Heart left ventricle (tissue), 16 donors: ENCODE measurements at regions of chr5 and their contacts with region 1.

Region 1: GRCh38 chr5:149656576-149657182 is 73.4 kb upstream of the PPARGC1B start:
- DNase-seq: peak in 3 of 5 donors; percentile 49 to 61 (median 49)
- ATAC-seq: peak in 3 of 4 donors; percentile 33 to 51 (median 47)
- H3K4me3 ChIP-seq: no peak overlapping the region
- H3K27ac ChIP-seq: peak overlapping the region in 7 of 12 donors; percentile 33 to 84 (median 80)
- H3K4me1 ChIP-seq: peaks cover 0 to 32% (median 6%) of the 10 kb centered on the region in 12 donors
- H3K27me3 ChIP-seq: no peaks in the 10 kb centered on the region
- CTCF ChIP-seq: peak; percentile 60 to 77 (median 68)
- POLR2A ChIP-seq: no peak

Region 2: GRCh38 chr5:149694007-149694406 is 37.3 kb after region 1 on chr5:
- intact Hi-C with region 1: loop called in 1 of 10 experiments (anchors 1 kb)
- DNase-seq: peak; percentile 67 to 87 (median 78)
- ATAC-seq: peak; percentile 93 to 96 (median 96)
- H3K4me3 ChIP-seq: peak overlapping the region in 5 of 12 donors; percentile 9 to 28 (median 19)
- H3K27ac ChIP-seq: peak overlapping the region; percentile 22 to 94 (median 82)
- H3K4me1 ChIP-seq: peaks cover 0 to 27% (median 8%) of the 10 kb centered on the region in 12 donors
- H3K27me3 ChIP-seq: no peaks in the 10 kb centered on the region
- CTCF ChIP-seq: no peak
- POLR2A ChIP-seq: no peak

Region 3: DNA sequence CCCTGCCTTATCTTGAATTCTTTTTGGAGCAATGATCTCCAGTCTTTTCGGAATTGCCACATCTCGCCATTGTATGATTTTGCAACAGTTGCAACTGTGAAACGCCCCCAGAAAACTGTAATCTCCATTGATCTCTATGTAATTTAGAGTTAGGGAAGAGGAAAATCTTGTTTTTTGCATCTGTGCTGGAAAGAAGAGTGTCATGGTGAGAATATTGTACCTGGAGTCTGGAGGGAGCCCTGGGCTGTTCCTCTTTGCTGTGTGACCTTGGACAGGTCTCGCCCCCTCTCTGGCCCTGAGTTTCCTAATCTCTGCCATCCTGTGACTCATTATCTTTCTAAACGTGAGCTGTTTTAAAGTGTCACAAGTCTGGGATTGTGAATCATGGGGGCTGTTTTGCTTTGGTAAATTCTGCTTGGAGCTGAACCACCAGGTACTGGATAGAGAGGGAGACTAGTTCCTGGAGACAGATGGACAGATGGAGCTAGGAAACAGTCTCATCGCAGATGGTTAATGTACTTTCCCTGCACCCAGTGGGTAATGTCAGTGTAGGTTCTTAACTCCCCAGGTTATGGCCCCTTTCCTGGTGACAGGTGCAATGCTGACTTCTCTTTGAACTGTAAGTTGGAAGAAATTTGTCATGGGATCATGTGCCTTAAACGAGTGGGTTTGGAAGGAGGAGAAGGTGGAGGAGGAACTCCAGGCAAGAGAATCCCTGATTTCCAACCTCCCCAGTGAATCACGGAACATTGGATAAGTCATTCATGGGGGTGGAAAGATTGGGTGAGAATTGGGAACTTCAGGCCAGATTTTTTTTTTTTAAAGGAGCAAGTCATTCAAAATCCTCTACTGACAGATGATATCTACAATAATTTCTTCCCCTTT is 93.0 kb after region 1 on chr5:
- intact Hi-C with region 1: loop called in 1 of 10 experiments (anchors 5 kb)
- DNase-seq: peak in 1 of 5 donors; percentile 4
- ATAC-seq: no peak
- H3K4me3 ChIP-seq: no peak overlapping the region
- H3K27ac ChIP-seq: peak overlapping the region in 7 of 12 donors; percentile 14 to 61 (median 33)
- H3K4me1 ChIP-seq: peaks cover 0 to 70% (median 33%) of the 10 kb centered on the region in 12 donors
- H3K27me3 ChIP-seq: no peaks in the 10 kb centered on the region
- CTCF ChIP-seq: no peak
- POLR2A ChIP-seq: no peak